Activated T-helper 1 cell treated with anti-CD3 and anti-CD28 coated beads, Interleukin-12 subunit alpha, Interleukin-12 subunit beta, Interleukin-2, Interleukin-4 antibody, amounts not matched to agents 30 ng/mL and 10 ng/mL and 1 ng/mL, durations not matched to agents 14 hours and 24 hours and 36 hours (primary cell): ENCODE measurements at regions of chr15 and their contacts with region 1.

Region 1: GRCh38 chr15:66603301-66604179 is 37.7 kb upstream of the LCTL start:
- DNase-seq: peak; percentile 42
- H3K4me3 Mint-ChIP-seq: no peak overlapping the region
- H3K27ac Mint-ChIP-seq: no peak overlapping the region
- H3K4me1 Mint-ChIP-seq: peaks cover under 1% of the 10 kb centered on the region
- H3K27me3 Mint-ChIP-seq: peaks cover 12% of the 10 kb centered on the region

Region 2: GRCh38 chr15:66774001-66774814 is 170.7 kb after region 1 on chr15:
- intact Hi-C with region 1: loop called (anchors 5 kb)
- DNase-seq: peak; percentile 14
- H3K4me3 Mint-ChIP-seq: no peak overlapping the region
- H3K27ac Mint-ChIP-seq: no peak overlapping the region
- H3K4me1 Mint-ChIP-seq: no peaks in the 10 kb centered on the region
- H3K27me3 Mint-ChIP-seq: peaks cover under 1% of the 10 kb centered on the region

Region 3: DNA sequence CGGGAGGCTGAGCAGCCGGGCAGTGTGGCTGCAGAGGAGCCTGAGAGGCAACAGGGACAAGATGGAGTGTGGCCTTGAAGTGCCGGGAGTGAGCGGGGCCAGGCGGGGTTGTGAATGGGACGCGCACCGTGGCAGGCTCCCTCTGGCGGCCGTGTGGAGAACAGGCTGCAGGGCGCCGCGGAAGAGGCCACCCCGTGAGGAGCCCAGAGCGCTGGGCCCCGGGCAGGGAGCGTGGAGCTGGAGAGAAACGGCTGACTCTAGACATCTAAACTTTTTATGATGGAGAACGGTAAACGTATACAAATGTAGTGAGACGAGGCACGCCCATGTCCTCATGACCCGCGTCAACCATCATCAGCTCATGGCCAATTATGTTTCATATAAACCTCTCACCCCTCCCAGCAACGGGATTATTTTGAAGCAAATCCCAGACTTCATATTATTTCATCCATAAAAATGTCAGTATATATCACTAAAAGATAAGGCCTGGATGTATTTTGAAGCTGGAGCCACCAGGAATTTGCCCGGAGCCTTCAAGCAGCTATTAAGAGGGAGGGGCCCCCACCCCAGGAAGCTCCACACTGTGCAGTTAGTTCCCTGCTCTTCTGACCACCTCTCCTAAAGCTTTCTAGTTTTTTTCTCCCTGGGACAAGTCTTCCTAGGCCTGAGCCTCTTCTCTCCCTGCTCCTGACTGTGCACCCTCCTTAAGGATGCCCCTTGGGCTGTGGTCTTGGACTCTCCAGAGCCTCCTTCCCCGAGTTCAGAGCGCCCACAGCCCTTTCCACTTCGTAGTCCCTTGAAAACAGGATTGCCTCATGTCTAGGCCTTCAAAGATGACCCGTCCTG is 247.9 kb after region 1 on chr15:
- intact Hi-C with region 1: loop called (anchors 1 kb)
- DNase-seq: peak; percentile 67
- H3K4me3 Mint-ChIP-seq: no peak overlapping the region
- H3K27ac Mint-ChIP-seq: no peak overlapping the region
- H3K4me1 Mint-ChIP-seq: no peaks in the 10 kb centered on the region
- H3K27me3 Mint-ChIP-seq: peaks cover 7% of the 10 kb centered on the region

Region 4: GRCh38 chr15:66862878-66863335 is 259.4 kb after region 1 on chr15:
- intact Hi-C with region 1: loop called (anchors 1 kb)
- DNase-seq: peak; percentile 54
- H3K4me3 Mint-ChIP-seq: no peak overlapping the region
- H3K27ac Mint-ChIP-seq: no peak overlapping the region
- H3K4me1 Mint-ChIP-seq: peaks cover 12% of the 10 kb centered on the region
- H3K27me3 Mint-ChIP-seq: peaks cover 11% of the 10 kb centered on the region